ENCODE measurements at regions of chr15 and their contacts with region 1.

Region 1: DNA sequence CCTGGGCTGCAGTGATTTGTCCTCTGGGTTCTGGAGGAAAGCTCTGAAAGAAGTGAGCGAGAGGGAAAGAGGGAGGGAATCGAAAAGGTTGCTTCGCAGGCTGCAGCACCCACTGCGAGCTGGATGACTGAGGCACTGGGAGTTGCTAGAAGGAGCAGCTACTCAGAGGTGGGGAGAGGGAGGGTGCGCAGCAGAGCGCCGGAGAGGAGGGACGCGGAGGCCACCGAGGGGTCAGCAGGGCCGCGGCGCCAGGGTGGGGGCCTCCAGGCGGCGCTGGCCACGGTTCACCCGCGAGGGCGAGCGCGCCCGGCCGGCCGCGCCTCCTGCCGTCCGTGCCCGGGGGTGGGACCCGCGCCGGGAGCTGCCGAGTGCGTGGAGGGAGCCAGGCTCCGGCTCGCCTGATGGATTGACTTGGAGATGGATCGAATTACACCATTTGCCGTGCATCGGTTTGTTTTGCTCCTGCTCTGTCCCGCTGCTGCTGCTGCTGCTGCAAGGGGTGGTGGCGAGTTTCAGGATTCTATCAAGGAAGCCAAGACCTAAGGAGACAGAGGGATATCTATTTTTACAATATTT is at the start of gene SEMA6D:
- DNase-seq: peak; percentile 84
- ATAC-seq: peak; percentile 88
- total RNA-seq, gene SEMA6D: 16.5 TPM

Region 2: DNA sequence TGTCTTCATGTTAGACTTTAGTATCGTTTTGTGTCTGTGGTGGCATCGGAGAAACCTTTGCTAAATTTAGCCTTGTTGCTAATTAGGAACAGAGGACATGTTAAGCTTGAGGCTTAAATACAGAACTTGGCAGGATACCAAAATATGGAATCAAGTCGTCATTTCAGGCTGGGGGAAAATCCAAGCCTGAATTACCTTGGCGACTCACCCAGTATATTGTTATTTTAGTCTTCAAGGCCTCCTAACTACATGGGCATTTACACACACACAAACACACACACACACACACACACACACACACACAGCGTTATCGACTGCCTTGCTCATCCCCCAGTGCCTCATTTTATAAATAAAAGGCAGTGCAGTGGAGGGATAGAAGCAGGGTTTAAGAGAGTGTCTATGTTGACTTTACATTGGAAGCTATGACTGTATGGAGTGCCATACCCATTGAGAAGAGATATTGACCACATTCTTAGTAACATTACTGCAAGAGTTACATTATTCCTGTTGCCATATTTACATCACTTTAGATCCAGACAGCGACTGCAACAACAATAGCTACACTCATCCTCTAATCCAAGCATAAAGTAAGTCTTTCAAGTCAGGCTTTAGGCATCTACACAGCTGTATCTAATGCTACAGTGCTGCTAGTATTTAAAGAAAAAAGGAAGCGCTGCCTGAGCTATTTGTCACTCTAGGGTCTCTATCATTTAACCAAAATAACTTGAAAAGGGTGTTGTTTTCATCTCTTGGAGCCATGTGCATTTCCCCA is 210.6 kb before region 1 on chr15:
- intact Hi-C with region 1: loop called (anchors 5 kb)
- DNase-seq: no peak
- ATAC-seq: peak; percentile 89

Region 3: DNA sequence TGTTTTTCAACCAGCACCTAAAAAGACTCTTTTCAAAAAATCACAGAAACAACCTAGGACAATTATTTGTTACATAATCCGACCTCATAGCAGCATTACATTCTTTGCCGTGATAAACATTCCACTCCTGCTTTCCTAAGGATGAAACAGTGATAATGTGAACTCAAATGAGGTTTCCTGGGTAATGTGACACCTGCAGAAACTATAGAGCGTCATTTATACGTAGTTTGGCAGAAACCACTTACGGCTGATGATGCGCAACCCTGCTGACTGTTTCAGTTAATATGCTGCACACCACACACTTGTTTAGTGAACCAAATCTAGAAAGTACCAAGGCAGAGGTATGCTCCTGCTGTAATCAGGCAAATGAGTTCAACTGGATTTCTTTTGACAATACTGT is 56.0 kb after region 1 on chr15:
- intact Hi-C with region 1: loop called (anchors 10 kb)
- DNase-seq: no peak
- ATAC-seq: no peak

Measured in Right ventricle myocardium superior (tissue), 1 donor.